ENCODE measurements at regions of chr15 and their contacts with region 1.

Region 1: GRCh38 chr15:92714477-92715401 is 59.2 kb upstream of the FAM174B start:
- DNase-seq: no peak
- ATAC-seq: peak; percentile 89
- H3K4me3 ChIP-seq: peak overlapping the region; percentile 57 to 59
- H3K27ac ChIP-seq: peak overlapping the region; percentile 55
- H3K4me1 ChIP-seq: 0 out of 2 replicates have a peak, but pooled peaks cover 4% of the 10 kb centered on the region
- H3K27me3 ChIP-seq: no peaks in the 10 kb centered on the region
- CTCF ChIP-seq: peak; percentile 96

Region 2: GRCh38 chr15:92277776-92278175 is 437.0 kb before region 1 on chr15:
- CTCF ChIA-PET with region 1: no interaction called
- POLR2A ChIA-PET with region 1: no interaction called
- in situ Hi-C with region 1: no loop called
- intact Hi-C with region 1: loop called (anchors 10 kb)
- DNase-seq: no peak
- ATAC-seq: peak; percentile 81
- H3K4me3 ChIP-seq: no peak overlapping the region
- H3K27ac ChIP-seq: no peak overlapping the region
- H3K4me1 ChIP-seq: no peaks in the 10 kb centered on the region
- H3K27me3 ChIP-seq: peaks cover 3% of the 10 kb centered on the region; the same call in 1 of the 2 replicates
- CTCF ChIP-seq: peak; percentile 64

Region 3: GRCh38 chr15:92391640-92392039 is 323.1 kb before region 1 on chr15:
- CTCF ChIA-PET with region 1: interaction called, 5 read pairs
- POLR2A ChIA-PET with region 1: no interaction called
- in situ Hi-C with region 1: no loop called
- intact Hi-C with region 1: loop called (anchors 1 kb)
- DNase-seq: no peak
- ATAC-seq: peak; percentile 81
- H3K4me3 ChIP-seq: no peak overlapping the region
- H3K27ac ChIP-seq: no peak overlapping the region
- H3K4me1 ChIP-seq: peaks cover 5% of the 10 kb centered on the region; the same call in 1 of the 2 replicates
- H3K27me3 ChIP-seq: peaks cover 56% of the 10 kb centered on the region
- CTCF ChIP-seq: peak; percentile 77

Region 4: GRCh38 chr15:92451225-92451825 is 263.4 kb before region 1 on chr15:
- CTCF ChIA-PET with region 1: no interaction called
- POLR2A ChIA-PET with region 1: no interaction called
- in situ Hi-C with region 1: no loop called
- intact Hi-C with region 1: no loop called
- DNase-seq: no peak
- ATAC-seq: no peak; the same call in 1 of the 2 replicates
- H3K4me3 ChIP-seq: no peak overlapping the region
- H3K27ac ChIP-seq: no peak overlapping the region
- H3K4me1 ChIP-seq: no peaks in the 10 kb centered on the region; the same call in 1 of the 2 replicates
- H3K27me3 ChIP-seq: no peaks in the 10 kb centered on the region; the same call in 1 of the 2 replicates
- CTCF ChIP-seq: no peak

Region 5: GRCh38 chr15:92521624-92522008 is 193.1 kb before region 1 on chr15:
- CTCF ChIA-PET with region 1: interaction called, 11 read pairs
- POLR2A ChIA-PET with region 1: no interaction called
- in situ Hi-C with region 1: no loop called
- intact Hi-C with region 1: loop called (anchors 1 kb)
- DNase-seq: peak; percentile 47
- ATAC-seq: peak; percentile 98
- H3K4me3 ChIP-seq: no peak overlapping the region
- H3K27ac ChIP-seq: no peak overlapping the region
- H3K4me1 ChIP-seq: no peaks in the 10 kb centered on the region
- H3K27me3 ChIP-seq: no peaks in the 10 kb centered on the region
- CTCF ChIP-seq: peak; percentile 81

Region 6: GRCh38 chr15:92617549-92618520 is 96.9 kb before region 1 on chr15:
- CTCF ChIA-PET with region 1: interaction called, 5 read pairs
- POLR2A ChIA-PET with region 1: no interaction called
- in situ Hi-C with region 1: no loop called
- intact Hi-C with region 1: loop called (anchors 10 kb)
- DNase-seq: no peak
- ATAC-seq: peak; percentile 80
- H3K4me3 ChIP-seq: no peak overlapping the region
- H3K27ac ChIP-seq: peak overlapping the region; percentile 73
- H3K4me1 ChIP-seq: peaks cover 25% of the 10 kb centered on the region
- H3K27me3 ChIP-seq: no peaks in the 10 kb centered on the region
- CTCF ChIP-seq: no peak

Region 7: GRCh38 chr15:92763459-92763858 is 48.7 kb after region 1 on chr15:
- CTCF ChIA-PET with region 1: no interaction called
- POLR2A ChIA-PET with region 1: no interaction called
- in situ Hi-C with region 1: no loop called
- intact Hi-C with region 1: no loop called
- DNase-seq: no peak
- ATAC-seq: no peak
- H3K4me3 ChIP-seq: no peak overlapping the region
- H3K27ac ChIP-seq: no peak overlapping the region
- H3K4me1 ChIP-seq: no peaks in the 10 kb centered on the region
- H3K27me3 ChIP-seq: no peaks in the 10 kb centered on the region
- CTCF ChIP-seq: no peak